AG04449 (cell line): ENCODE measurements at regions of chr20 and their contacts with region 1.

Region 1: GRCh38 chr20:58209652-58210397 is 18.6 kb downstream of the ANKRD60 start:
- DNase-seq: no peak
- H3K4me3 ChIP-seq: no peak overlapping the region
- CTCF ChIP-seq: peak; percentile 100

Region 2: GRCh38 chr20:57383447-57384347 is 826.1 kb before region 1 on chr20:
- CTCF ChIA-PET with region 1: interaction called, 19 read pairs
- POLR2A ChIA-PET with region 1: no interaction called
- DNase-seq: no peak
- H3K4me3 ChIP-seq: no peak overlapping the region
- CTCF ChIP-seq: no peak

Region 3: GRCh38 chr20:57522380-57522993 is 687.3 kb before region 1 on chr20:
- CTCF ChIA-PET with region 1: interaction called, 25 read pairs
- POLR2A ChIA-PET with region 1: no interaction called
- DNase-seq: no peak
- H3K4me3 ChIP-seq: no peak overlapping the region
- CTCF ChIP-seq: no peak

Region 4: GRCh38 chr20:57622579-57623377 is 587.0 kb before region 1 on chr20:
- CTCF ChIA-PET with region 1: interaction called, 25 read pairs
- POLR2A ChIA-PET with region 1: no interaction called
- DNase-seq: no peak
- H3K4me3 ChIP-seq: no peak overlapping the region
- CTCF ChIP-seq: peak; percentile 74

Region 5: DNA sequence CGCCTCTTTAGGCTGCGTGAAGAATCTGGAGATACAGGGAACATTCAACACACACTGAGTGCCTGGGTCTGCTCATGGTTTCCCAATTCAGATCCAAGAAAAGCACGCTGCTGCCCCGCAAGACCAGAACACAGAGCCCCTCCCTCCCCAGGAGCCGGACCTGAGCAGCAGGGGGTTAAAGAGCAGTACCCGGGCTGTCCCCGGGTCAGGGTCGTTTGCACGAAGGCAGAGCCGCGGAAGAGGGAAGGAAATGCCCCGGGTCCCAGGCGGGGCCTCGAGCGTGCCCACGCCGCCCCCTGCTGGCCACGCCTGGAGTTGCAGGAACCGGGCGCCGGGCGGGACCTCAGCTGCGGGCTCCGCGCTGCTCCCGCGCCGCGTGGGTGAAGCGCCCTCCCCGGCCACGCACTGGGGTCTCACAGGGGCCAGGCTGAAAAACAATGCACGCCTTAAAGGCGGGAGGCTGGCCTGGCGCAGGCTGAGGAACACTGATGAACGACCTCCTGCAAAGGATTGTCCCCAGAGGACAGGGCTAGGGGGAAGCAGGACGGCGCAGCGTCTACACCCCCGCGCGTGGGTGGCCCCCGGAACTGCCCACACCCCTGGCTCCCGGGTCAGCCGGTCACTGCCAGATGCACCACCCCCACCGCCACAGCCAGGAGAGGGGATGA is 30.3 kb before region 1 on chr20:
- CTCF ChIA-PET with region 1: interaction called, 20 read pairs
- POLR2A ChIA-PET with region 1: no interaction called
- DNase-seq: no peak
- H3K4me3 ChIP-seq: peak overlapping the region; percentile 43
- CTCF ChIP-seq: peak; percentile 92

Region 6: GRCh38 chr20:58224974-58225373 is 15.1 kb after region 1 on chr20:
- CTCF ChIA-PET with region 1: interaction called, 25 read pairs
- POLR2A ChIA-PET with region 1: no interaction called
- DNase-seq: no peak
- H3K4me3 ChIP-seq: no peak overlapping the region
- CTCF ChIP-seq: no peak

Region 7: DNA sequence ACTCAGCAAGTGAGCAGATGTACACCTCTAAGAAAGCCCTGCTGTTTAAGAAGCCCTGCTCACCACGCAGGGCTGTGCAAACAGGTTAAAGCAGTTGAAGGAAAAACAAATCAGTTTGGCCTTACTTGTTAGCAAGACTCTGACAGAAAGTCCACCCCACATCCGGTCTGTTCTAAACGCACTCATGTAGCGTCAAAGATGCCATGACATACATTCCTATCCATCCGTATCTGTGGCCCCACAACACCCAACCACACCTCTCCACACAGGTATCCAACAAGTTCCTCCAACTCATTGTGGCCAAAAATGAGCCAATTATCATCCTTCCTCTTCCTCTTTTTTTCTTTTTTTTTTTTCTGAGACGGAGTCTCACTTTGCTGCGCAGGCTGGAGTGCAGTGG is 76.9 kb after region 1 on chr20:
- CTCF ChIA-PET with region 1: no interaction called
- POLR2A ChIA-PET with region 1: no interaction called
- DNase-seq: no peak
- H3K4me3 ChIP-seq: no peak overlapping the region
- CTCF ChIP-seq: no peak

Region 8: DNA sequence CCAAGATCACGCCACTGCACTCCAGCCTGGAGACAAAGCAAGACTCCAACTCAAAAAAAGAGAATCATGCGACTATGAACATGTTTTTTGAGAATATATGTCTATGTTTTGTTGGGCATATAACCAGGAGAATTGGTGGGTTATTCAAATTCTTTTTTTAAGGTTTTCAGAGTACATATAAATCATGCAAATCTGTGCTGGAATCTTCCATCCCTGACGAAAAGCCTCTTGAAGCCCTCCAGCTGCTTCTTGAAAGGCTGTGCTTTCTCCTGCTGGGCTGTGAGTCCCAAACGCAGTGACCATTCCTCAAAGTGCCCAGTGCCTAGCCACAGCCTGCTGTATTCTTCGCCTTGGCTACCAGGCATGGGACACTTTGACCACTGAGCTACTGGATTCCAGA is 90.5 kb after region 1 on chr20:
- CTCF ChIA-PET with region 1: no interaction called
- POLR2A ChIA-PET with region 1: no interaction called
- DNase-seq: no peak
- H3K4me3 ChIP-seq: no peak overlapping the region
- CTCF ChIP-seq: no peak